ENCODE measurements at regions of chr17 and their contacts with region 1.

Region 1: GRCh38 chr17:69523244-69523861 is 108.9 kb downstream of the MAP2K6 start:
- DNase-seq: peak in 2 of 9 experiments; percentile 16 to 25
- ATAC-seq: no peak
- H3K4me3 ChIP-seq: no peak overlapping the region
- H3K4me3 Mint-ChIP-seq: no peak overlapping the region
- H3K27ac ChIP-seq: no peak overlapping the region
- H3K27ac Mint-ChIP-seq: peak overlapping the region; percentile 2
- H3K4me1 ChIP-seq: no peaks in the 10 kb centered on the region
- H3K4me1 Mint-ChIP-seq: no peaks in the 10 kb centered on the region
- H3K27me3 ChIP-seq: no peaks in the 10 kb centered on the region
- H3K27me3 Mint-ChIP-seq: no peaks in the 10 kb centered on the region
- CTCF ChIP-seq: no peak

Region 2: DNA sequence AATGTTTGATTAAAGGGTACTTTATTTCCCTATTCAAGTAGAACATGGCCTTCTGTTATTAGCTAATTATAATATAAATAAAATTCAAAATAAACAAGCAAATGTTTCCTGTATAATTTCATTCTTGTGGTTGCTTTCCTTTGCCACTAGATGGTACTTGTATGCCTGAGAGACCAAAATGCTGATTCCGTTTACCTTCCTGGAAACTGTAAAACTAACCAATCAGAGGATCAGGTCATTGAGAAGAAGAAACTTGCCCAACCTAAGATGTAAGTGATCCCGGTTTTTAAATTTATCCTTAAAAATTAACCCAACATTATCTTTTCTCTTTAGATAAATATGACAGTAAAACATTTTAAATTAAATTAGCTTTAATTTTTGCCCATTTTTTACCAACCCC is 188.3 kb before region 1 on chr17:
- CTCF ChIA-PET with region 1: interaction called, 4 read pairs
- POLR2A ChIA-PET with region 1: no interaction called
- intact Hi-C with region 1: loop called (anchors 2 to 10 kb)
- DNase-seq: peak in 2 of 9 experiments; percentile 25 to 41
- ATAC-seq: no peak
- H3K4me3 ChIP-seq: no peak overlapping the region
- H3K4me3 Mint-ChIP-seq: no peak overlapping the region
- H3K27ac ChIP-seq: no peak overlapping the region
- H3K27ac Mint-ChIP-seq: no peak overlapping the region
- H3K4me1 ChIP-seq: no peaks in the 10 kb centered on the region
- H3K4me1 Mint-ChIP-seq: no peaks in the 10 kb centered on the region
- H3K27me3 ChIP-seq: peaks cover 0 to 3% of the 10 kb centered on the region in 2 experiments
- H3K27me3 Mint-ChIP-seq: peaks cover 11% of the 10 kb centered on the region
- CTCF ChIP-seq: peak; percentile 22

Region 3: DNA sequence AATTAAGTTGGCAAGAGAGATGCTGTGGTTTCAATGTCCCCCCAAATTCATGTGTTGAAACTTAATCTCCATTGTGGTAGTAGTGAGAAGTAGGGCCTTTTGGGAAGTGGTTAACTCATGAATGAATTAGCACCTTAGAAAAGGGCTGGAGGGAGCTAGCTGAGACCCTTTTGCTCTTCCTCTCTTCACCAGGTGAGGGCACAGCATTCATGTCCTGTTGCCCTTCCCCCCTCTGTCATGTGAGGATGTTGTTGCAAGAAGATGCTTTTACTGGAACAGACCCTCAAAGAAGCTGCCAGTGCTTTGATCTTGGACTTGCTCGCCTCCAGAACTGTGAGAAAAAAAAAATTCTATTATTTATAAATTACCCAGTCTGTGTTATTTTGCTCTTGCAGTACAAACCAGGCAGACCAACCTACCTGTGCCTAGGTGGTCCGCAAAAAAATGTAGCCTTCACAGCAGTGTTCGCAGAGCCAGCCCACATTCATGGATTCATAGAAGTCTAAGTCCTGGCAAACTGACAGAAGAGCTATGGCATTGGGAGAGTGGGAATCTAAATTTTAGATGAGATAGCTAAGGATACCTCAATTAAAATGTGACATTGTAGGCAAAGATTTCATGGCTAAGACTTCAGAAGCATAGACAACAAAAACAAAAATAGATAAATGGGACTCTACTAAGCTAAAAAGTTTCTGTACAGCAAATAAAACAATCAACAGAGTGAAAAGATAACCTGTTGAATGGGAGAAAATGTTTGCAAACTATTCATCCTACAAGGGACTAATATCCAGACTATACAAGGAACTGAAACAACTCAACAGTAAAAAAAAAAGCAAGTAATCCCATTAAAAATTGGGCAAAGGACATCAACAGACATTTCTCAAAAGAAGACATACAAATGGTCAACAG is 164.4 kb before region 1 on chr17:
- CTCF ChIA-PET with region 1: interaction called, 4 read pairs
- POLR2A ChIA-PET with region 1: no interaction called
- intact Hi-C with region 1: loop called in 1 of 2 experiments (anchors 1 kb)
- DNase-seq: peak in 2 of 9 experiments; percentile 21 to 49
- ATAC-seq: no peak
- H3K4me3 ChIP-seq: no peak overlapping the region
- H3K4me3 Mint-ChIP-seq: no peak overlapping the region
- H3K27ac ChIP-seq: no peak overlapping the region
- H3K27ac Mint-ChIP-seq: no peak overlapping the region
- H3K4me1 ChIP-seq: peaks cover 3% of the 10 kb centered on the region
- H3K4me1 Mint-ChIP-seq: peaks cover 3% of the 10 kb centered on the region
- H3K27me3 ChIP-seq: no peaks in the 10 kb centered on the region
- H3K27me3 Mint-ChIP-seq: peaks cover 7% of the 10 kb centered on the region
- CTCF ChIP-seq: no peak

Measured in CD8-positive, alpha-beta T cell (primary cell).